A673 (cell line): ENCODE measurements at regions of chr4 and their contacts with region 1.

Region 1: DNA sequence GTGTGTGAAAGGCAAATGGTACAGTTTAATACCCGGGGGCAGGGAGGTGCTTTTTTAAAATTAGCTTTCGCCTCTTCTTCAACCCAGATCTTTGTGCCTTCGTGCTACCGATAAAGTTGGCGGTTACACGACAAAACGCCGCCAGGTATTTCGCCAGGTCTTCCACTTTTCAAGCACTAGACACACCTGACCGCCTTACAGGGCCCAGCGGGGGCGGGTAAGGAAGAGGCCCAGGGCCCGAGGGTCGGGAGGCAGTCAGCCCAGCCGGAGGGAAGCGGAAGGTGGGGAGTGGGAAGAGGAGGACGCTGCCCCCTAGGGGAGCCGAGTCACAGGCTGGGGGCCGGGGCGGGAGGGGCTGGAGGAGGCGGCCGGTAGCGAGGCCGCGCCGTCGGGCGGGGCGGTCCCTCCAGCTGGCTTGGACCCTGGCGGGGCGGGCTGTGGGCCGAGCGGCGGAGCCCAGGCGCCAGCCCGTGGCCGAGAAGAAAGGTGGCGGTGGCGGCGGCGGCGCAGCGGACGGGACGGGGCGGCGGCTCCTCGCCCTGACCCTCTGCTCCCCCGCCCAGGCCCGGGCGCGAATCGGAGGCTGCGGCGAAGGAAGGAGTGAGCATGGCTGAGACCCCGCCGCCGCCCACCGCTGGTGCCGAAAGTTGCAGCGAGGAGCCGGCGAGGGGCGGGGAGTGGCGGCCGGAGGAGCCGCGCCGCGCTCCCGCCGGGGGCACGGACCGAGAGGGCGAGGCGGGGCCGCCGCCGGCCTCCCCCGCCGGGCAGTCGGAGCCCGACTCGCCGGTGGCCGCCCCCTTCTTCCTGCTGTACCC is 16.2 kb downstream of the UTP3 start:
- DNase-seq: peak; percentile 75
- H3K4me3 ChIP-seq: peak overlapping the region; percentile 68
- H3K27ac ChIP-seq: peak overlapping the region; percentile 80
- H3K4me1 ChIP-seq: no peaks in the 10 kb centered on the region
- H3K27me3 ChIP-seq: no peaks in the 10 kb centered on the region
- CTCF ChIP-seq: peak; percentile 35; the same call in 1 of the 2 replicates

Region 2: DNA sequence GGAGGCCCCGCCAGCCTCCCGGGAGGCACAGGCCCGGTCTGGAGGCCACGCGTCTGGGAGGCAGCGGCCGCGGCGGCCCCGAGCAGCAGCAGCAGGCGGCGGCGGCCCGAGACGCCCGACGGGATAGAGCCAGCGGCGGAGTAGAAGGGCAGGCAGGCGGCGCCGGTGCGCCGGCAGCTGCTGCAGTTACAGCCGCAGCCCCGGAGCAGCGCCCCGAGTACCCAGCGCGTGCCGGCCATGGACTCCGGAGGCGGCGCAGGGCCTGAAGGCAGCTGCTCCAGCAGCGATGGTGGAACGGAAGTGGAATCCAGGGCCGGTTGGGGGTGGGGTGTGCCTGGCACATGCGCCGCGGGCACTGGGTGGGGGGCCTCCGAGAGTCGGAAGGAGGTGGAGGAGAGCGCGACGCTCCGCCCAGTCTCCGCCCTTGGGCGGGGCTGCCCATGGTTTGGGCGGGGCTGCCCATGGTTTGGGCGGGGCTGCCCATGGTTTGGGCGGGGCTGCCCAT is 135.1 kb after region 1 on chr4 and contains the start of gene GRSF1:
- CTCF ChIA-PET with region 1: no interaction called
- POLR2A ChIA-PET with region 1: no interaction called
- intact Hi-C with region 1: loop called (anchors 10 kb)
- DNase-seq: peak; percentile 88
- H3K4me3 ChIP-seq: peak within 1 kb of the TSS; percentile 66
- H3K27ac ChIP-seq: peak within 1 kb of the TSS; percentile 82
- H3K4me1 ChIP-seq: no peaks in the 10 kb centered on the region
- H3K27me3 ChIP-seq: no peaks in the 10 kb centered on the region
- CTCF ChIP-seq: no peak
- total RNA-seq, gene GRSF1: 58.5 and 63.2 TPM in 2 replicates